GM10248 (cell line): ENCODE measurements at regions of chr11 and their contacts with region 1.

Region 1: DNA sequence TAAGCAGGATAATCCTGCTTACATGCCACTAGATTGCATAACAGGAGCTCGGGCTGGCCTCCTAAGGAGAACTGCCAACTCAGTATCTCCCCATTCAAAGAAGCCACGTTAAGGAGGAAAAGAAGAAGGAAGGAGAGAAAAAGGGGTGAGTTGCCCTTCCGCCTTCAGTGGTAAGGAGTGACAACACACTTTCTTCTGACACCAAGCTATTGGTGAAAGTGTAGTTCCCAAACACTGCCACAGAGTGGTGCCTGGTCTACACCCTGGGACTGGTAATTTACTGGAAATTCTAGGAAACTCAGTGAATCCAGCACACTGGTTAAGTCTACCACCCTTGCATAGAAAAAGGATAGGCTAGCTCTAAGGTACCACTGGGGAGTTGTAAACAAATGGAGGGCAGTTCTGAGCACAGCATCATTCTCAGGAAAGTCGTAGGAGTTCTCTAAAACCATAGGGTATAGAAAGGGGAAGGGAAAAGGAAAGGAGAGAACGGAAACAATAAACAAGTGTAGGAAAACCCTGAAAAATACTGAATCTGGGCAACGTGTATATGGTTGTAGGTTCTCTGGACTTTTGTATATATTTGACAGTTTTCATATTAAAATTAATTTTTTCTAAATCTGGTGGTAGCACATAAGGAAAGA is 58.2 kb downstream of the RRAS2 start:
- DNase-seq: peak; percentile 41
- CTCF ChIP-seq: peak; percentile 70

Region 2: DNA sequence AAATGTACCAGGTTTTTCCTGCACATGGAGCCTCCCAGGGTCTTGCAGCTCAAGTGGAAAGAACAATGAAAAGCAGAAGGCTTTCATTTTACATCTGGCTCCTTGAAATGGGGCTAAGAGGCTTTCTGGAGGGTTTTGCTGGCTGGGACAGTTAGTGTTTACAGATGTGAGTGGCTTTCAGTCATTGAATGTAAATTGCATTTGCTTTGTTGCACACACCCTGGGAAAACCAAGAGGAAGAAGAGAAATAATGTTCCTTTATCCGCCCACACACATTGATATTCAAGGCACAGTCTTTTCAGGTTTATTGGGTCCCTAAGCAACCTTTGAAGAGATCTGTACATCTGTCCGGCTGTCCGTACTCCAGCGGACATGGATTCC is 193.7 kb before region 1 on chr11:
- CTCF ChIA-PET with region 1: no interaction called
- POLR2A ChIA-PET with region 1: no interaction called
- DNase-seq: no peak
- CTCF ChIP-seq: no peak

Region 3: GRCh38 chr11:14275076-14275475 is 25.7 kb before region 1 on chr11:
- CTCF ChIA-PET with region 1: interaction called, 14 read pairs
- POLR2A ChIA-PET with region 1: no interaction called
- DNase-seq: no peak
- CTCF ChIP-seq: no peak

Region 4: DNA sequence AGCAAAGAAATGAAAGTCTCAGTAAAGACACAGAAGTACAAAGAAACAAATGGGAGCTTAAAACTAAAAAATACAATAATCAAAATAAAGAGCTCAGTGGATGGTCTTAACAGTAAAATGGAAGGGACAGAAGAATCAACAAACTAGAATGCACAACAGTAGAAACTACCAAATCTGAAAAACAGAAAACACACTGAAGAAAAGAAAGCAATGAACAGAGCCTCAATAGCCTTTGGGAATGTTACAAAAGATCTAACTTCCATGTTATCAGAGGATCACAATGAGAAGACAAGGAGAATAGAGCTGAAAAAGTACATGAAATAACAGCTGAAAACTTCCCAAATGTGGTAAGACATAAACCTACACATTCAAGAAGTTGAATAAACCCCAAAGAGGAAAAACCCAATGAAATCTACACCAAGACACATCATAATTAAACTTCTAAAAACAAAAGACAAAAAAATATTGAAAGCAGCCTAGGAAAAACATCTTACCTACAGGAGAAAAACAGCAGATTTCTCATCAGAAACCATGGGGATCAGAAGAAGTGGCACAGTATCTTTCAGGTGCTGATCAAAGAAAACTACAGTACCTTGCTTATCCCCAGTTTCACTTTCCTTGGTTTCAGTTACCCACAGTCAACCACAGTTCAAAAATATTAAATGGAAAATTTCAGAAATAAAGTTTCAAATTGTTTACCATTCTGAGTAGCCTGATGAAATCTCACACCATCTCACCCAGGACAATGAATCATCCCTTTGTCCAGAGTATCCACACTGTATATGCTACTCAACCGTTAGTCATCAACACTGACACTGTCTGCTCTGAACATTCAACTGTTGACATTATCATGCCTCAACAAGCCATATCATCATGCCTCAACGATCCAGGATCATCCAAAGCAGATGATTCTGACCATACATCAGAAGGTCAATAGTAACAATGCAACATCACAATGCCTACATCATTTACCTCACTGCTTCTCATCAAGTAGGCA is 36.0 kb after region 1 on chr11:
- CTCF ChIA-PET with region 1: interaction called, 13 read pairs
- POLR2A ChIA-PET with region 1: no interaction called
- DNase-seq: no peak
- CTCF ChIP-seq: no peak

Region 5: GRCh38 chr11:14422052-14422813 is 121.5 kb after region 1 on chr11:
- CTCF ChIA-PET with region 1: interaction called, 37 read pairs
- POLR2A ChIA-PET with region 1: no interaction called
- DNase-seq: no peak
- CTCF ChIP-seq: no peak

Region 6: GRCh38 chr11:14454861-14455632 is 154.3 kb after region 1 on chr11:
- CTCF ChIA-PET with region 1: interaction called, 109 read pairs
- POLR2A ChIA-PET with region 1: no interaction called
- DNase-seq: peak; percentile 34
- CTCF ChIP-seq: peak; percentile 46